ENCODE measurements at regions of chr1 and their contacts with region 1.

Region 1: GRCh38 chr1:28259307-28260167 is at the start of gene SESN2:
- DNase-seq: peak; percentile 100
- ATAC-seq: peak; percentile 86
- H3K4me3 Mint-ChIP-seq: peak within 1 kb of the TSS; percentile 79
- H3K27ac Mint-ChIP-seq: peak within 1 kb of the TSS; percentile 49; the same call in 1 of the 2 replicates
- H3K4me1 Mint-ChIP-seq: peaks cover 33% of the 10 kb centered on the region
- H3K27me3 Mint-ChIP-seq: no peaks in the 10 kb centered on the region; the same call in 1 of the 2 replicates
- CTCF ChIP-seq: no peak
- total RNA-seq, gene SESN2: 22.3 to 38.1 TPM (median 23.3 TPM) in 3 replicates

Region 2: DNA sequence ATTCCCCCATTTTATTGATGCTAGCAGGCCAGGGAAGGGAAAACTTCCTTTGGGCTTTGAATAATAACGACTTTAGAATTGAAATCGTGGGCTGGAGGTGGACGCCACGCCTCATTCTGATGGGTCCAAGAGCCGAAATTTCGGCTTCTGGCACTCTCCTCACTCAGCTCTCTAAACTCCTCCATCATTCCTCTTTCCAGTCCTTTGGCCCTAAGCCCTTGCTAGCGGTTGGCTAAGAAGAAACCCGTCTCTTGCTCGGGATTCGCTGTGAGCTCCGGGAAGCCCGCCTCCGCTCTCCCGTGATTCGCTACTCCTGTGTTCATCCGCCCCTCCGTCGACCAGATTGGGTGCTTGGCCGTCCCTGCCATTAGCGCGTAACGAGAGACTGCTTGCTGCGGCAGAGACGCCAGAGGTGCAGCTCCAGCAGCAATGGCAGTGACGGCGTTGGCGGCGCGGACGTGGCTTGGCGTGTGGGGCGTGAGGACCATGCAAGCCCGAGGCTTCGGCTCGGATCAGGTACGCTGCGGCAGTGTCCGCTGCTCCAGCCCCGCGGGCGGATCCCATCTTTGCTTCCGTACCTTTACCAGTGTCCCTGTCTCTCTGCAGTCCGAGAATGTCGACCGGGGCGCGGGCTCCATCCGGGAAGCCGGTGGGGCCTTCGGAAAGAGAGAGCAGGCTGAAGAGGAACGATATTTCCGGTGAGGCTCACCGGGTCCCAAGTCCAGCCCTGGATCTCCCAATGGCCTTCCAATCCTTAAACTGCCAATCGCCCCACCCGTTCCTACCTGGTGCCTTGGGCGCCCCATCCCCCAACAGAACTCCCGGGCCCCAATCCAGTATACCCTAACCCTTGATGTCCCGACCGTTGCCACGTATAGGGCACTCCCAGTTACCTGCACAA is 23.5 kb before region 1 on chr1 and contains the start of gene ATP5IF1:
- CTCF ChIA-PET with region 1: no interaction called
- POLR2A ChIA-PET with region 1: interaction called, 12 read pairs
- DNase-seq: peak; percentile 95
- ATAC-seq: peak; percentile 97
- H3K4me3 Mint-ChIP-seq: no peak within 1 kb of the TSS
- H3K27ac Mint-ChIP-seq: no peak within 1 kb of the TSS
- H3K4me1 Mint-ChIP-seq: peaks cover 8% of the 10 kb centered on the region
- H3K27me3 Mint-ChIP-seq: no peaks in the 10 kb centered on the region
- CTCF ChIP-seq: no peak
- total RNA-seq, gene ATP5IF1: 201 to 245 TPM (median 228 TPM) in 3 replicates

Region 3: GRCh38 chr1:28329395-28330153 is 70.0 kb after region 1 on chr1:
- CTCF ChIA-PET with region 1: no interaction called
- POLR2A ChIA-PET with region 1: interaction called, 19 read pairs
- DNase-seq: peak; percentile 50
- ATAC-seq: peak; percentile 63
- H3K4me3 Mint-ChIP-seq: peak overlapping the region; percentile 90
- H3K27ac Mint-ChIP-seq: peak overlapping the region; percentile 99
- H3K4me1 Mint-ChIP-seq: peaks cover 9% of the 10 kb centered on the region
- H3K27me3 Mint-ChIP-seq: peaks cover 2% of the 10 kb centered on the region; the same call in 1 of the 2 replicates
- CTCF ChIP-seq: no peak

Measured in WTC11 (cell line).